MCF 10A (cell line): ENCODE measurements at regions of chr7 and their contacts with region 1.

Region 1: DNA sequence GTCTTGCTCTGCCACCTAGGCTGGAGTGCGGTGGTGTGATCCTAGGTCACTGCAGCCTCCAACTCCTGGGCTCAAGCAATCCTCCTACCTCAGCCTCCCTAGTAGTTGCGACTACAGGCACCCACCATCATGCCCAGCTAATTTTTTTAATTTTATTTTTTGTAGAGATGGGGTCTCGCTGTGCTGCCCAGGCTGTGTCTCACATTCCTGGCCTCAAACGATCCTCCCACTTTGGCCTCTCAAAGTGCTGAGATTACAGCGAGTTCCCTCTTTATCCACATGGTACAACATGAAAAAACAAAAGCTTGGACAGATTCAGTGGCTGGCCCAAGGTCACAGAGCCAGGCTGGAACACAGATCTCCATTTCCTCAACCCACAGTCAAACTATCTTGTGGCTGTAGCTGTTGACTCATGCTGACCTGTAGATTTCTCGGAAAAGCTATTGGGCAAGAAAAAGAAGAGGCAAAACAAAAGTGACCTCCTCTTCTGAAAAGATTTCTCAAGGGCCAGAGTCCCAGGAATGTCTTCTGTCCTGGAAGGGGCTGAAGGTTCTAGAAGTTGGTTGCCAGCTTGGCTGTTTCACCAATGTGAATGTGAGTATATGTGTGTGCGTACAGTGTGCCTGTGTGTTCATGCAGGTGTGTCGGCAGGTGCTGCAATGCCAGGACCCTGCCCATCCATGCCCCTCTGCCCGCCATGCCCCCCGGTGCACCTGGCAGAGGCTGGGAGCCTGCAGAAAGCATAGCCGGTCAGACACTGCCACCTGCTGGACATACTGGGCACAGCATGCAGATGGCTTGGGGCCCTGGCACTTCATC is 28.4 kb downstream of the TMEM130 start:
- DNase-seq: peak; percentile 88
- H3K4me3 Mint-ChIP-seq: no peak overlapping the region
- H3K27ac Mint-ChIP-seq: no peak overlapping the region
- H3K4me1 Mint-ChIP-seq: peaks cover 10% of the 10 kb centered on the region
- H3K27me3 Mint-ChIP-seq: peaks cover 11% of the 10 kb centered on the region
- CTCF ChIP-seq: peak; percentile 93

Region 2: GRCh38 chr7:98280791-98281756 is 560.3 kb before region 1 on chr7 and contains the start of gene BRI3:
- CTCF ChIA-PET with region 1: no interaction called
- POLR2A ChIA-PET with region 1: no interaction called
- intact Hi-C with region 1: loop called (anchors 10 kb)
- DNase-seq: peak; percentile 90
- H3K4me3 Mint-ChIP-seq: peak within 1 kb of the TSS; percentile 91
- H3K27ac Mint-ChIP-seq: peak within 1 kb of the TSS; percentile 87
- H3K4me1 Mint-ChIP-seq: peaks cover 23% of the 10 kb centered on the region
- H3K27me3 Mint-ChIP-seq: no peaks in the 10 kb centered on the region
- CTCF ChIP-seq: peak; percentile 9
- total RNA-seq, gene BRI3: 154 and 246 TPM in 2 replicates

Region 3: GRCh38 chr7:98420966-98421612 is 420.3 kb before region 1 on chr7:
- CTCF ChIA-PET with region 1: interaction called, 515 read pairs
- POLR2A ChIA-PET with region 1: no interaction called
- intact Hi-C with region 1: no loop called
- DNase-seq: peak; percentile 87
- H3K4me3 Mint-ChIP-seq: no peak overlapping the region
- H3K27ac Mint-ChIP-seq: no peak overlapping the region
- H3K4me1 Mint-ChIP-seq: peaks cover 16% of the 10 kb centered on the region
- H3K27me3 Mint-ChIP-seq: no peaks in the 10 kb centered on the region
- CTCF ChIP-seq: peak; percentile 98

Region 4: GRCh38 chr7:98439484-98439883 is 401.9 kb before region 1 on chr7:
- CTCF ChIA-PET with region 1: interaction called, 515 read pairs
- POLR2A ChIA-PET with region 1: interaction called, 3 read pairs
- intact Hi-C with region 1: no loop called
- DNase-seq: no peak
- H3K4me3 Mint-ChIP-seq: no peak overlapping the region
- H3K27ac Mint-ChIP-seq: no peak overlapping the region
- H3K4me1 Mint-ChIP-seq: no peaks in the 10 kb centered on the region
- H3K27me3 Mint-ChIP-seq: peaks cover 18% of the 10 kb centered on the region
- CTCF ChIP-seq: no peak

Region 5: DNA sequence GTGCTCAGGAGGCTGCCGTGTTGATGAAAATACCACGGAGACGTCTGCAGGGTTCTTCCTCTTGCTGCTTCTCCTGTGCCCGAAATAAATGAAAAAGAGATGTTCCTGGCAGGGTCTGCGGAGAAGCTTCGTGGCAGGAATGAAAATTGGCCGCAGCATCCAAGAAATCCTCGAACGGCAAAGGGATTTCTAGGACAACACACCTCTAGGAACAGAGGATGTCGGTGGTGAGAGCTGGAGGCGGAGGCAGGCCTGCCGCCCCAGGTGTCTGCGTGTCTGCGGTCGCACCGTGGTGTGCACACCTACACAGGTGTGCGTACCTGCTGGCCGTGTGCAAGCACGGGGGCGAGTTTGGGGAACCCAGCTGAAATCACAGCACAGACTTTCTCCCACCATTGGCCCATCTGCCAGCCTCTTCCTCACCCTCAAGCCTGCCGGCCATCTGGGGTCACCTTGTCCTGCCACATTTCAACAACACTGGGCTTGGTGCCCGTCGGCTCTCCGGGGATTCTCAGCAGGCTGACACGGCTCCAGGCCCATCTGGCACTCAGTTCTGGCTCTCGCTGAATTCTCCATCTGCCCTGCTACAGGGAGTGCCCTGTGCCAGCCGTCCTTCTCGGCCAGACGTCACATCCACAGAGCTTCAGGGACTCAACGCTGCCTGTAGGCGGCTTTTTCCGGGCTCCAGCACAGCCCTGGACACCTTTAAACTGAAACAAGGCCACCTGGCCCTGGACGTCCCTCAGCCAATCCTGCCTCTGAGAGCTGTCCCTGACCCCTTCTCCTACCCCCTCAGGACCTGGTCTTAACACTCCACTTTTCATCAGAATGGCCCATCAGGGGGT is 14.8 kb before region 1 on chr7:
- CTCF ChIA-PET with region 1: interaction called, 79 read pairs
- POLR2A ChIA-PET with region 1: no interaction called
- intact Hi-C with region 1: no loop called
- DNase-seq: peak; percentile 76
- H3K4me3 Mint-ChIP-seq: no peak overlapping the region
- H3K27ac Mint-ChIP-seq: no peak overlapping the region
- H3K4me1 Mint-ChIP-seq: peaks cover 5% of the 10 kb centered on the region
- H3K27me3 Mint-ChIP-seq: no peaks in the 10 kb centered on the region
- CTCF ChIP-seq: peak; percentile 8